ENCODE measurements at regions of chr2 and their contacts with region 1.

Region 1: DNA sequence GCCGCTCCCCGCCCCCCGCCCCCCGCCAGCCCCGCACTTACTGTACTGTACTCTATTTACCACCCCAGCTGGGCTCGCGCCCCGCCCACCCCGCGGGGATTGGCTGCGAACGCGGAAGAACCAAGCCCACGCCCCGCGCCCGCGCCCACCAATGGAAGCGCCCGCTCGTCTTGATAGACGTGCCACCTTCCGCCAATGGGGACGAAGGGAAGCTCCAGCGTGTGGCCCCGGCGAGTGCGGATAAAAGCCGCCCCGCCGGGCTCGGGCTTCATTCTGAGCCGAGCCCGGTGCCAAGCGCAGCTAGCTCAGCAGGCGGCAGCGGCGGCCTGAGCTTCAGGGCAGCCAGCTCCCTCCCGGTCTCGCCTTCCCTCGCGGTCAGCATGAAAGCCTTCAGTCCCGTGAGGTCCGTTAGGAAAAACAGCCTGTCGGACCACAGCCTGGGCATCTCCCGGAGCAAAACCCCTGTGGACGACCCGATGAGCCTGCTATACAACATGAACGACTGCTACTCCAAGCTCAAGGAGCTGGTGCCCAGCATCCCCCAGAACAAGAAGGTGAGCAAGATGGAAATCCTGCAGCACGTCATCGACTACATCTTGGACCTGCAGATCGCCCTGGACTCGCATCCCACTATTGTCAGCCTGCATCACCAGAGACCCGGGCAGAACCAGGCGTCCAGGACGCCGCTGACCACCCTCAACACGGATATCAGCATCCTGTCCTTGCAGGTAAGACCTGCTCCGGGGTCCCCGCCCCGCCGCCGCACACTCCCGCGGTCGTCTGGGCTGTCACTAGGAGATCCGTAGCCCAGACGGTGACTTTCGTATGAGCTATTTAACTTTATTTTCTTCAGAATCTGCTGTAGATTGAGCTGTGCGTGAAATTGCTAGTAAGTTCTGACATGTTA is at the start of gene ID2:
- DNase-seq: peak; percentile 98
- CTCF ChIP-seq: no peak

Region 2: DNA sequence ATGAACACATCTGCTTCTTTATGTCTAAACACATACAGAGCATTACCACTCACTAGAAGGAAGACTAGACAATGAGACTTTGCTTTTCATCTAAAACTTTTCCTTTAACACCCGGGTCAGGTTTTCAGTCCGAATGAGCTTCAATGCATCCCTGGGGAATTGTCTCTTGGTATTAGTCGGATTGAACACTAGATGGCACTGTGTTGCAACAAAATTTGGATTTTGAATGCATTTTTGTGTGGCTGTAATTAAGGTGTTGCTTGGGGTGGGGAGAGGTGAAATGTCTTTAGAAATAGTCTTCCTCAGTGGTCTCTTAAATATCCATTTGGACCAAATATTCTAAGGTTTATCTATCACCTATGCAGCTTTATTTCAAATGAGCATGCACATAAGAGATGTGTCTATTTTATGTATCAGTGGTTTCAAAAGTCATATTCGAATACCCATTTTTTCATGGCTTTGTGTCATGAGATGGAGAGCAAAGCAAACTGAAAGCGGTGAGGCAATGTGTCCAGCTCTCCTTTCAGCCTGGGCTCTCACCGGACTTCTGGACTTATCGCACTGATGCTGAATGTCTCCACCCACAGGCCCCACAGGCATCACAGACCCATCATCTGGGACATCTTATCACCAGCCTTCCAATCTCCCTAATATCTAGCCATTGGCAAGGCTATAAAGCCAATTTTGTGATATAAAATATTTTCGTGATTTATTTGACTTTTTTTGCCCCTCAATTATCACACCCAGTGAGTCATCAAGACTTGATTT is 1254.6 kb before region 1 on chr2:
- CTCF ChIA-PET with region 1: interaction called, 18 read pairs
- POLR2A ChIA-PET with region 1: interaction called, 5 read pairs
- DNase-seq: peak; percentile 52
- CTCF ChIP-seq: peak; percentile 59

Region 3: GRCh38 chr2:7950035-7950612 is 731.9 kb before region 1 on chr2:
- CTCF ChIA-PET with region 1: no interaction called
- POLR2A ChIA-PET with region 1: no interaction called
- DNase-seq: no peak
- CTCF ChIP-seq: no peak

Region 4: GRCh38 chr2:8234757-8235374 is 447.2 kb before region 1 on chr2:
- CTCF ChIA-PET with region 1: interaction called, 3 read pairs
- POLR2A ChIA-PET with region 1: interaction called, 24 read pairs
- DNase-seq: peak; percentile 74
- CTCF ChIP-seq: no peak

Region 5: GRCh38 chr2:8525582-8526402 is 156.2 kb before region 1 on chr2:
- CTCF ChIA-PET with region 1: interaction called, 5 read pairs
- POLR2A ChIA-PET with region 1: interaction called, 11 read pairs
- DNase-seq: peak; percentile 83
- CTCF ChIP-seq: peak; percentile 68

Region 6: DNA sequence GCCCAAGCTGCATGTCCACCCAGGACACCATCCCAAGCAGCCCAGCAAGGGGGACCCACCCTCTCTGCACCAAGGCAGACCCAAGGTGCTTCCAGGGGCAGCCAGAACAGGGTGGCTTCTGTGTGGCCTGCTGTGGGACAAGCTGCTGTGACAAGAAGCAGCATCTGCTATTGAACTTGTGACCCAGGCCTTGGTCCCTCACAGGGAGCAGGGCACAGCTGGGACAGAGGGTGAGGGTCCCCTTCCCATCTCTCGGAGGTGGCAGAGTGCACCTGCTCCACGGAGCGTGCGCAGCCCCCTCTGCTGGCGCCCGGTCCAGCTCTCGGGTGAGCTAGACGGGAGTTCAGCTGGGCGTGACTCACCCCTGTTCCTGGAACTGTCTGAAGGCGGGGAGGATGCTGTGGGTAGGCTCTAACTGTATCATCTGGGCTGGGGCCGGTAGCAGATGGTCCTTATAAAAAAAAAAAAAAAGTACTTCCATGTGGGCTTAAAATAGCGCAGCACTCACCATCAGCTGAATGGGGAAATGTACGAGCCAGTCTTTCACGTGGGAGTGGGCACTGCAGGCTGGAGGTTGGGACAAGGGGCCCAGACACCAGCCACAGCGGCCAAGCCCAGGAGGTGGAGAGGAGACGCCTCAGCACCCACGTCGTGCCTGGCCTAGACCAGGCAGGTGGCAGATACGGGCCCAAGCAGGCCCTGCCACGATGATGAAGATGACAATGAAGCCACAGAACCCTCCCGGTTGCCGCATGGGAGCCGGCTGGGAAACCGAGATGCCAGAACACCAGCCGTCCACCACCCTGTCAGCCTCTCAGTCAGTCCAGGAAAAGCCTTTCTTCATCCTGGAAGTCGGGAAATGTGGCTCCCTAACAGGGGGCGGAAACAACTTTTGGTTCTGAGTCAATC is 137.0 kb before region 1 on chr2:
- CTCF ChIA-PET with region 1: interaction called, 3 read pairs
- POLR2A ChIA-PET with region 1: interaction called, 27 read pairs
- DNase-seq: peak; percentile 84
- CTCF ChIP-seq: peak; percentile 53

Region 7: DNA sequence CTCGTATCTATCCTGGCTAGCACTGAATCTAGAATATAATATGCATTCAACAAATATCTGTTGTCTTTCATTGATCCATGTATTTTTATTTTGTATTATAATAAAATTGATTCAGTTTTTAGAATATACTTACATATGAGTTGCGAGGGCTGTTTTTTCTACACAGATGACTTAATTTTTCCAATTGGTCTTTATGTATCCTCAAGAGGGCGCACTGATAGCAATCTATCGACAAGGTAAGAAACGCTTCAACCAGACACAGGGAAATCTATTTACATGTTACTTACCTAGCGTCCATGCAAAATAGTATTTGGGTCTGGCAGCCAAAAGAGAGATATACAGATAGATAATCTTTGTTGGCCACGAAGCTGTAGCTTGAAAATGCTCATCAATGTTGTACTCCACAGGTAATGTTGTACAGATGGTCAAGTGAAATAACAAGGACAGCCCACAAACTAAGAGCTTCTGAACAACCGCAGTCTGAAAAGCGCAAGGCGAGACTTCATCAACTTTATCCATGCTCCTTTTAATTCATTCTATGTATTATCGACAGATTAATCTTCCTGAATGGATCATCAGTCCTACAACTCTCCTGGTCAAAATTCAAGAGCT is 190.9 kb after region 1 on chr2:
- CTCF ChIA-PET with region 1: no interaction called
- POLR2A ChIA-PET with region 1: no interaction called
- DNase-seq: peak; percentile 46
- CTCF ChIP-seq: peak; percentile 37

Region 8: GRCh38 chr2:9003616-9004337 is 321.7 kb after region 1 on chr2 and contains the start of gene MBOAT2:
- CTCF ChIA-PET with region 1: no interaction called
- POLR2A ChIA-PET with region 1: interaction called, 12 read pairs
- DNase-seq: peak; percentile 91
- CTCF ChIP-seq: no peak

Measured in GM10248 (cell line).